ENCODE measurements at regions of chr1 and their contacts with region 1.

Region 1: DNA sequence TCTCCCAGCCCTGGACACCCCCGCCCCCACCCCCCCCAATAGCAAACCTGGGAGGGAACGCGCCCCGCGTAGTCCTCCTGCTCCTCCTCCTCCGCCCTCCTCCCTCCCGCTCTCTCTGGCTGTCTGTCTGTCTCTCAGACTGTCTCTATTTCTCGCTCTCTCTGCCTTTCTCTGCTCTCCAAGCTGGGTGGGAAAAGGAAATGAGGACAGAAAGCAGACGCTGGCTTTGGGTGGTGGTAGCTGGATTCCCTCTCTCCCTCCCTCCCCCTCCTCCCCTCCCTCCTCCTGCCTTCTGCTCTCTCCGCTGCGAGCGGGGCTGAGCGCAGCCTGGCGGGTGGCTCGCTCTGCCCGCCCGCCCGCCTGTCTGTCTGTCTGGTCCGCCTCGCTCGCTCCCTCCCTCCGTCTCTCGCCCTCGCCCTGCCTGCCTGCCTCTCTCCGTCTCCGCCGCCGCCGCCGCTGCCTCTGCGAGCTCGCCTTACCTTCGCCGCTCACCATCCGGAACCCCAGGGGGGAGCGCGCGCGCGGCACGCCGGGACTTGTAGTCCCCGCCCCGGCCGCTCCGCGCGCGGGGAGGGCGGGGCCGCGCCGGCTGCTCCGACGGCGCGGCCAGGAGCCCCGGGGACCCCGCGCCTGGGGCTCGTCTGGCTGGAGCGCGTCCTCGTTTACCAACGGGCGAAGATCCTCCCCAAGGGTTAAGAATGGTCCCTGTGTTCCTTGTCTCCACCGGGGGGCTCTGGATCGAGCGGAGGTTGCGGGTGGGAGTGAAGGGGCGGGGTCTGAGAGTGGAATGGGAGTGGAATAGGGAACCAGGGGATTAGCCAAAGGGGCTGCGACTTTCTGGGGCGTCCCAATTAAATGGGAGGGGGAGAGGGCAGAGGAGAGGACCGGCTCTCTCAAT is at the start of gene AHDC1:
- DNase-seq: peak; percentile 93 to 96 (median 94)
- ATAC-seq: peak; percentile 25 to 75 (median 68)
- H3K4me3 ChIP-seq: peak within 1 kb of the TSS; percentile 82 to 100 (median 96)
- H3K27ac ChIP-seq: peak within 1 kb of the TSS; percentile 83 to 99 (median 98)
- H3K4me1 ChIP-seq: peaks cover 12 to 69% (median 44%) of the 10 kb centered on the region in 12 donors
- H3K27me3 ChIP-seq: no peaks in the 10 kb centered on the region
- CTCF ChIP-seq: peak in 5 of 12 donors; percentile 5 to 47 (median 25)
- POLR2A ChIP-seq: peak in 1 of 2 donors; percentile 92
- total RNA-seq, gene AHDC1: 29.2 to 50.2 (median 42.1) TPM

Region 2: DNA sequence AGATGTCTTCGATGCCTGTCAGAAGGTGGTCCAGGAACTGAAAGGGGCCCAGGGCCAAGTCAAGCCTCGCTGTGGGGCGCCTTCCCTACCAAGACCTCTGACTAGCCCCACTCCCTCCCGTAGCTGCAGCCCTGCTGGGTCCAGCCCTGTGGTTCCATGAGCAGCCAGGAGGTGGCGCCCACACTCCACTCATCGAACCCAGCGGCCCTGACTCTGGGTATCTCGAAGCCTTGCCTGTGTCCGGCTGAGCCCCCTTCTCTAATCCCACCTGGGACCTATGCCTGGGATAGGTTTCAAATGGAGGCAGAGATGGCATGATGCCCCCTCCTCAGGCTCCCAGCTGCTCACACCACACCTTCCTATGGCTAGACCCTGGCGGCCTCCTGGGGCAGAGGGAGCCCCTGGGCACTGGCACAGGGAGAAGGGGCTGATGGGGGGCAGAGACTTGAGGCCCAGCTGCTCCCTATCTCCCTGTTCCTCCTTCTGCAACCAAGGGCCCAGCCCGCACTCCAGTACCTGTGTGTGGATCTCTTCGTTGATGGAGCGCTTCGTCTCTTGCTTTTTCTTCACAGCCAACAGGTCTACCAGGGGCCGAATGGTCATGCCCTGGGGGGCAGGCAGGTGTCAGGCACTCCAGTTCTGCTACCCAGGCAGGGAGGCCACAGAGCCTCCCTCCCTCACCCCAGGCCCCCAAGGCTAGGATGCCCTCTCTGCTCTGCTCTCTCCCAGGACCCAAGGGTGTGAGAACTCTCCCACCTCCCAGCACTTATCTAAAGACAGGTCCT is 501.0 kb before region 1 on chr1:
- intact Hi-C with region 1: loop called in 1 of 10 experiments (anchors 5 kb)
- DNase-seq: peak; percentile 66 to 89 (median 79)
- ATAC-seq: peak in 3 of 4 donors; percentile 33 to 44 (median 42)
- H3K4me3 ChIP-seq: no peak overlapping the region
- H3K27ac ChIP-seq: peak overlapping the region in 1 of 12 donors; percentile 16
- H3K4me1 ChIP-seq: peaks cover 3 to 38% (median 24%) of the 10 kb centered on the region in 12 donors
- H3K27me3 ChIP-seq: no peaks in the 10 kb centered on the region
- CTCF ChIP-seq: peak; percentile 91 to 99 (median 96)
- POLR2A ChIP-seq: no peak

Region 3: DNA sequence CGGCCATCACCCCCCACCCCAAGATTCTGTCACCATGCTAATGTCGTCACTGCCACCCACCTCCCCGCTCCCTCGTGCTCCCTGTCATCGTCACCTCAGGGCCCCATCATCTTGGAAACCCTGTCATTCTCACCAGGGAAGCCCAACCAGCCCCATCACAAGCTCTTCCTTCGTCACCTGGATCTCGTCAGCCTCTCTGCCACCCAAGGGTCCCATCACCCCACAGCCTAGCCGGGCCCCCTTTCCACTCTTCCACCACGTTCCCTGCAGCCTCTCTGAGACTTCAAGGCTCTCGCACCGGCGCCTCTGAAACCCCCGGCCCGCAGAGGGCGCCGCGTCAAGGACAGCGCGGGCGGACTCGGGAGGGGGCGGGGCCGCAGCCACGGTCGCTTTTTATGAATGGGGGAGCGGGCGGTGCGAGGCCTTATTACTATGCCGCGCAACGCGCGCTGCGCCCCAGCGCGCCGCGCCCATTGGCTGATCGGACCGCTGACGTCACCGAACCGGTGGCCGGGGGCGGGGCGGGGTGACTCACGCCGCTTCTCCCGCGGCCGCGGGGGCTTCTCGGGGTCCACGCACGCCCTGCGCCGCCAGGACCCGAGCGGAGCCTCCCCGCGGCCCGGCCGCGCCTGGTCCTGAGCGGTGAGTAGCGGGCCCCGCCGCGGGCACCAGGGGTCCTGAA is 211.7 kb before region 1 on chr1 and contains the start of gene GPR3:
- intact Hi-C with region 1: loop called in 3 of 10 experiments (anchors 2 to 5 kb)
- DNase-seq: peak; percentile 91 to 96 (median 94)
- ATAC-seq: peak; percentile 81 to 90 (median 88)
- H3K4me3 ChIP-seq: peak within 1 kb of the TSS; percentile 32 to 78 (median 58)
- H3K27ac ChIP-seq: peak within 1 kb of the TSS in 11 of 12 donors; percentile 51 to 83 (median 71)
- H3K4me1 ChIP-seq: peaks cover 7 to 51% (median 28%) of the 10 kb centered on the region in 12 donors
- H3K27me3 ChIP-seq: no peaks in the 10 kb centered on the region
- CTCF ChIP-seq: peak; percentile 19 to 80 (median 58)
- POLR2A ChIP-seq: peak in 1 of 2 donors; percentile 67
- total RNA-seq, gene GPR3: 0.28 to 2.4 (median 0.53) TPM in 8 of 9 donors, not detected in the other

Region 4: DNA sequence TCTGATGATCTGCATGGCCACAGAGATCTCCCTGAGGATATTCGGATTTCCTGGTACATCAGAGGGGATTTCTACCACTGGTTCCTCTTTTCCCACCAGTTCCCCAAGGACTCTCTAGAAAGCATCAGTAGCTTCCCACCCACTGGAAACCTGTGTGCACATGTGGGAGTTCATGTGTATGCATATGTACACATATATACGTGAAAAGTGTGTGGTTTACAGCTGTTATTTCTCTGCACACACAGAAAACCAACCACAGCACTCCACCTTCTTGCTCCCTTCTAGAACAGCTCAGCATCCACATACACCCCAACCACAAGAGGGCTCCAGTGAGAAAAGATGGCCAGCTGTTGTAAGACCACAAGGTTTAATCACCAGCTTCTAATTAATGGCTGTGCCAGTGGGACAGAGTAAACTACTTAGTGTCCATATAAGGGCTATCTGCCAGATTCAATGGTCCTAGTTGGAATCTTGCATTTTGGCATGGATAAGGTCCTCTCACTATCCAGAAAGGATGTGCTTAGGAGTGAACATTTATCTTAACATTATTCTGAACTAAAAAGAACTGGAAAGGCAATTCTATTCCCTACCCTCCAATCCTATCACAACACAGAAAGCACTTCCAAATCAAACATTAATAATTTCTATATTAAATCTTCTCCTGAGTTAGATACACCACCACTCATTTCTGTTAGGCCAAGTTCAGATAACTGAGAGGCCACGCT is 187.4 kb before region 1 on chr1:
- intact Hi-C with region 1: loop called in 3 of 10 experiments (anchors 5 kb)
- DNase-seq: peak in 1 of 5 donors; percentile 47
- ATAC-seq: peak in 3 of 4 donors; percentile 35 to 50 (median 40)
- H3K4me3 ChIP-seq: no peak overlapping the region
- H3K27ac ChIP-seq: peak overlapping the region in 7 of 12 donors; percentile 20 to 86 (median 75)
- H3K4me1 ChIP-seq: peaks cover 3 to 67% (median 56%) of the 10 kb centered on the region in 12 donors
- H3K27me3 ChIP-seq: no peaks in the 10 kb centered on the region
- CTCF ChIP-seq: peak; percentile 51 to 73 (median 66)
- POLR2A ChIP-seq: no peak

Region 5: GRCh38 chr1:27489910-27490741 is 113.8 kb before region 1 on chr1 and contains the start of gene WASF2:
- intact Hi-C with region 1: loop called in 2 of 10 experiments (anchors 5 to 10 kb)
- DNase-seq: peak; percentile 97 to 98 (median 98)
- ATAC-seq: peak; percentile 93 to 97 (median 96)
- H3K4me3 ChIP-seq: peak within 1 kb of the TSS; percentile 77 to 100 (median 96)
- H3K27ac ChIP-seq: peak within 1 kb of the TSS; percentile 98 to 100 (median 100)
- H3K4me1 ChIP-seq: peaks cover 5 to 62% (median 37%) of the 10 kb centered on the region in 12 donors
- H3K27me3 ChIP-seq: no peaks in the 10 kb centered on the region
- CTCF ChIP-seq: peak in 1 of 12 donors; percentile 5
- POLR2A ChIP-seq: peak; percentile 83 to 96
- total RNA-seq, gene WASF2: 27.5 to 103 (median 47.9) TPM

Region 6: DNA sequence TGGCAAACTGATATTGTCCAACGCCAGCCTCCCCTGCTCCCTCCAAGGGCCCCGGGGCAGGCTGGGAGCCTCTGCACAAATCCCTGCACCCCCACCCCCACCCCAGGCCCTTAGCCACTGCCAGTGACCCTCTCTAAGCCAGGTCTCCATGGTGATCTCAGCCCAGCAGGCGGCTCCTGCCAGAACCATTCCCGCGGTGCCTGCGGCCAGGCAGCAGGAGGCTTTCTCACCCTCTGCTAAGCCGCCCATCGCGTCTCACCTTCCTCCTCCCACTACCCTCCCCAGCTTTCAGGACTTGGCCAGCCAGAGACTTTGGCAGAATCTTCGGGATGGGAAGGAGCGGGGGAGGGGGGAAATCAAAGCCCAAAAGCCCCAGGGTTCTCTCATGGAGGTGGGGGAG is 67.2 kb before region 1 on chr1:
- intact Hi-C with region 1: no loop called
- DNase-seq: peak; percentile 75 to 87 (median 79)
- ATAC-seq: peak; percentile 55 to 87 (median 86)
- H3K4me3 ChIP-seq: no peak overlapping the region
- H3K27ac ChIP-seq: peak overlapping the region in 11 of 12 donors; percentile 65 to 94 (median 78)
- H3K4me1 ChIP-seq: peaks cover 12 to 64% (median 47%) of the 10 kb centered on the region in 12 donors
- H3K27me3 ChIP-seq: no peaks in the 10 kb centered on the region
- CTCF ChIP-seq: peak in 1 of 12 donors; percentile 2
- POLR2A ChIP-seq: no peak

Region 7: DNA sequence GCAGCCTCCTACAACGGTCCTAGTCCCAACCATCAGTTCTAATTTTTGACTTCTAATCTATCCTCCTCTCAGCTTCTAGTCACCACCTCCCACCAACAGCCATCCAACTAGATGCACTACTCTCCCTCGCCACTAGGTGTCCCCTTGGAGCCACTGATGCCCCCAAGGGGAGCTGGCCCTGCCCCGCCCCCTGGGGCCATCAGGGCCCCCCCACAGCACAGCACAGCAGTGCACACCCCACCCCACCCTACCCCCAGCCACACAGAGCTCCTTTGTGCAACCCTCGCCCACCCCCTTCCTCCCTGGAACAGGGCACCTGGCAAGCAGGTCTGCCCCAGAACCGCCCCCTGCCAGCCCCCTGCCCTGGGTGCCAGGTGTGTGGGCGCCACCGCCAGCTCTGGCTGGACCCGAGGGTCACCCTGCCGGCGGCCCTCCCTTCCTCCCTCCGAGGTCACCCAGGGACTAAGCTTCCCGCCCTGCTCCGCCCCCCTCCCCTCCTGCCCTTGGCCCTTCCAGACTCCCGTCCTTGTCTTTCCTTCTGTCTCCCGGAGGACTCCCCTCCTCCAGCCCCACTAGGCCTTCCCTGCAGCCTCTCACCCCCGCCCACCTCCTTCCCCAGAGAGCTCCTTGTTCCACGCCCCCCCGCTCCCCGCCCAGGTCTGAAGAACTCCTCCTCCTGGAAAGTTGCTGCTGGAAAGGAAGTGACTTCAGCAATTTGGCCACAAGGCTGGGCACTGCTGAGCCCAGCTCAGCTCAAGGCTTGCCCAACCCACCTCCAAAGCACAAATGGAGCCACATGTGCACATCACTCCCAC is 46.9 kb before region 1 on chr1:
- intact Hi-C with region 1: loop called (anchors 1 to 5 kb)
- DNase-seq: peak; percentile 93 to 96 (median 96)
- ATAC-seq: peak; percentile 21 to 76 (median 72)
- H3K4me3 ChIP-seq: peak overlapping the region in 9 of 12 donors; percentile 15 to 40 (median 32)
- H3K27ac ChIP-seq: peak overlapping the region; percentile 77 to 96 (median 90)
- H3K4me1 ChIP-seq: peaks cover 4 to 77% (median 66%) of the 10 kb centered on the region in 12 donors
- H3K27me3 ChIP-seq: no peaks in the 10 kb centered on the region
- CTCF ChIP-seq: peak; percentile 88 to 98 (median 95)
- POLR2A ChIP-seq: no peak

Region 8: GRCh38 chr1:27574871-27575831 is 28.8 kb before region 1 on chr1:
- intact Hi-C with region 1: loop called in 2 of 10 experiments (anchors 1 to 2 kb)
- DNase-seq: peak; percentile 86 to 92 (median 90)
- ATAC-seq: peak; percentile 11 to 74 (median 63)
- H3K4me3 ChIP-seq: peak overlapping the region; percentile 18 to 62 (median 52)
- H3K27ac ChIP-seq: peak overlapping the region; percentile 68 to 99 (median 94)
- H3K4me1 ChIP-seq: peaks cover 40 to 98% (median 83%) of the 10 kb centered on the region in 12 donors
- H3K27me3 ChIP-seq: peaks cover 0 to 9% (median 0%) of the 10 kb centered on the region in 9 donors
- CTCF ChIP-seq: peak in 9 of 12 donors; percentile 26 to 59 (median 36)
- POLR2A ChIP-seq: peak in 1 of 2 donors; percentile 20

Measured in heart left ventricle (tissue), 16 donors.